H1 (cell line): ENCODE measurements at regions of chr22 and their contacts with region 1.

Region 1: DNA sequence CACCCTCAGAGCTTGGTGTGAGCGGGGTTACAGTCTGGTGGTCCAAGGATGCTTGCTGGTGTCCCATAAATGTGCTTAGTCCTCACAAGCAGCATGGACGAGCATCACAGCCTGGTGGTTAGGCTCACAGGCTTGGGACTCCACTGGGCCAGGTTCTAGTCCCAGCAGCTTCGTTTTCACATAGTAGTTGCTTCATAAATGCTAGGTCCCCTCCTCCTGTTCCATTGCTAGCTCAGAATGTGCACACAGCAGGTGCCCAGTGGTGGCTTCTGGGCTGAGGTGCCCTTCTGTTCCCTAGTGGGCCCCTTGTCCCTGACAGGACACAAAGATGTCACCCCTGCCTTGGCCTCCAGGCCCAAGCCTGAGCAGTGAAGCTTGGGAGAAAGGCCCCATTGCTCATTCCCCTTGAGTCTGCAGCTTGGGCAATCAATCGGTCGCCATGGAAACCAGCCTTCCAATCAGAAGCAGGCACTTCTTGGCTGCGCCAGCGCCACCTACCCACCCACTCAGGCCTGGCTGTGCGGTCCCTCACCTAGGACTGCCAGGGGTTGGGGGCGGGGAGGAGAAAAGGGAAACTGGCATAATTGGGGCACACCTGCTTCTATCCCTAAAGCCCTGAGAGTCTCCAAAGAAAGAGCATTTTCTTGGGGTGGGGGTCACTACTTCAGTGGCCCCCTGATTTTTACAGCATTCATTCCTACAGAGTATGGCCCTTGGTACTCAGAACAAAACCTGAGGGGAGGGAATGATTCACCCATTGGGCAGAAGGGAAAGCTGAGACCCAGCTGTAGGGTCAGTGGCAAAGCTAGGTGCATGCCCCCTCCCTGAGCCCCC is 48.1 kb downstream of the CYTH4 start:
- DNase-seq: peak; percentile 69 to 91
- H3K4me3 ChIP-seq: no peak overlapping the region
- H3K27ac ChIP-seq: no peak overlapping the region
- H3K4me1 ChIP-seq: peaks cover 0 to 15% (median 4%) of the 10 kb centered on the region in 4 experiments; a peak in 5 of 7 replicates
- H3K27me3 ChIP-seq: peaks cover 0 to 27% (median 12%) of the 10 kb centered on the region in 4 experiments; a peak in 5 of 7 replicates
- CTCF ChIP-seq: peak; percentile 44 to 81 (median 73)
- EP300 ChIP-seq: no peak
- POLR2A ChIP-seq: no peak
- RAD21 ChIP-seq: peak; percentile 13 to 21; a peak in 1 of 4 replicates

Region 2: GRCh38 chr22:37340331-37341262 is 10.2 kb after region 1 on chr22:
- CTCF ChIA-PET with region 1: interaction called, 22 read pairs
- POLR2A ChIA-PET with region 1: interaction called, 9 read pairs
- DNase-seq: no peak
- H3K4me3 ChIP-seq: no peak overlapping the region
- H3K27ac ChIP-seq: no peak overlapping the region
- H3K4me1 ChIP-seq: peaks cover 0 to 23% (median 16%) of the 10 kb centered on the region in 4 experiments; a peak in 5 of 7 replicates
- H3K27me3 ChIP-seq: peaks cover 0 to 6% (median 4%) of the 10 kb centered on the region in 4 experiments; a peak in 3 of 7 replicates
- CTCF ChIP-seq: no peak
- EP300 ChIP-seq: no peak
- POLR2A ChIP-seq: no peak
- RAD21 ChIP-seq: no peak; a peak in 1 of 4 replicates

Region 3: DNA sequence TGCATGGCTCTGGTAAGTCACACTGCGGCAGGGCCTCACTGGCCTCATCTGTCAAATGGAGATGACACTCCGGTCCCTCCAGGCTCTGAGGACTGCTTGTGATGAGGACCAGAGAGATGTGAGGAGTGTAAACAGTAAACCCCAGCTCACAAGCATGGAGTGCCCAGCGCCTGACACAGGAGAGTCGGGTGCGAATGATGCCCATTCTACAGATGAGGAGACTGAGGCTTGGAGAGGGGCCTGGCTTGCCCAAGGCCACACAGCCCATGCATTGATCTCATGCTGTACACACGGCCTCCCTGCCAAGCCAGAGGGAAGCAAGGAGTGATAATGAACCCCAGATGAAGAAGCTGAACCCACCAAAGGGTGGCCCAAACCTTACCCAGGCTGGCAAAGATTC is 59.7 kb after region 1 on chr22:
- CTCF ChIA-PET with region 1: interaction called, 10 read pairs
- POLR2A ChIA-PET with region 1: no interaction called
- DNase-seq: no peak
- H3K4me3 ChIP-seq: no peak overlapping the region
- H3K27ac ChIP-seq: no peak overlapping the region
- H3K4me1 ChIP-seq: peaks cover 0 to 4% (median 0%) of the 10 kb centered on the region in 4 experiments; a peak in 3 of 7 replicates
- H3K27me3 ChIP-seq: no peaks in the 10 kb centered on the region; a peak in 1 of 7 replicates
- CTCF ChIP-seq: no peak
- EP300 ChIP-seq: no peak
- POLR2A ChIP-seq: no peak
- RAD21 ChIP-seq: no peak